ENCODE measurements at regions of chr2 and their contacts with region 1.

Region 1: DNA sequence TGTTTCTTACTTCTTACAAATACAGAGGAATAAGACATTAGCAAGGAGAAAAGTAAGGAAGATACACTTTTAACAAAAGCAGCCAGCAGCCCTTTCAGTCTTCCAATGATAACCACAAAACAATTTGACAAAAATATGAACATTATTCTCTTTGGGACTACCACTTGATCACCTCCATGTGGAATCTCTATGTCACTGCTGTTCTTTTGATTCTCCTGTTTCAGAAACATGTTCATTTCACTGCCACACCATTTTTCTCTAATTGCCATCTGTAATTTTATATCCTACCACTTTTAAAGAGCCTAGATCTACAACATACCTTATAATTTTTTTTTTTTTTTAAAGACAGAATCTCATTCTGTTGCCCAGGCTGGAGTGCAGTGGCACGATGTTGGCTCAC is 10.9 kb downstream of the INO80D start:
- DNase-seq: no peak
- H3K4me3 ChIP-seq: no peak overlapping the region
- H3K27ac ChIP-seq: no peak overlapping the region
- H3K4me1 ChIP-seq: no peaks in the 10 kb centered on the region
- H3K27me3 ChIP-seq: no peaks in the 10 kb centered on the region
- CTCF ChIP-seq: no peak
- POLR2A ChIP-seq: no peak

Region 2: GRCh38 chr2:206095536-206096332 is 20.6 kb after region 1 on chr2:
- CTCF ChIA-PET with region 1: interaction called, 3 read pairs
- POLR2A ChIA-PET with region 1: interaction called, 11 read pairs
- dilution Hi-C with region 1: no loop called
- intact Hi-C with region 1: no loop called
- DNase-seq: no peak
- H3K4me3 ChIP-seq: no peak overlapping the region
- H3K27ac ChIP-seq: no peak overlapping the region
- H3K4me1 ChIP-seq: no peaks in the 10 kb centered on the region
- H3K27me3 ChIP-seq: no peaks in the 10 kb centered on the region
- CTCF ChIP-seq: no peak
- POLR2A ChIP-seq: no peak

Measured in endothelial cell of umbilical vein (primary cell).